Activated CD4-positive, alpha-beta T cell treated with anti-CD3 and anti-CD28 coated beads for 36 hours (primary cell): ENCODE measurements at regions of chr21 and their contacts with region 1.

Region 1: GRCh38 chr21:45643021-45643980 is at the start of gene PCBP3:
- DNase-seq: peak; percentile 99
- ATAC-seq: peak; percentile 84
- H3K4me3 Mint-ChIP-seq: peak within 1 kb of the TSS; percentile 78
- H3K27ac Mint-ChIP-seq: peak within 1 kb of the TSS; percentile 70
- H3K4me1 Mint-ChIP-seq: peaks cover 47% of the 10 kb centered on the region
- H3K27me3 Mint-ChIP-seq: peaks cover 4% of the 10 kb centered on the region
- total RNA-seq, gene PCBP3: 12.2 to 13.2 TPM

Region 2: GRCh38 chr21:45287438-45288391 is 355.6 kb before region 1 on chr21 and contains the start of gene POFUT2:
- CTCF ChIA-PET with region 1: no interaction called
- POLR2A ChIA-PET with region 1: no interaction called
- intact Hi-C with region 1: loop called in 1 of 2 experiments (anchors 1 kb)
- DNase-seq: peak; percentile 99
- ATAC-seq: peak; percentile 86
- H3K4me3 Mint-ChIP-seq: peak within 1 kb of the TSS; percentile 75
- H3K27ac Mint-ChIP-seq: no peak within 1 kb of the TSS
- H3K4me1 Mint-ChIP-seq: peaks cover 15% of the 10 kb centered on the region
- H3K27me3 Mint-ChIP-seq: no peaks in the 10 kb centered on the region
- total RNA-seq, gene POFUT2: 14.7 to 14.9 TPM

Region 3: DNA sequence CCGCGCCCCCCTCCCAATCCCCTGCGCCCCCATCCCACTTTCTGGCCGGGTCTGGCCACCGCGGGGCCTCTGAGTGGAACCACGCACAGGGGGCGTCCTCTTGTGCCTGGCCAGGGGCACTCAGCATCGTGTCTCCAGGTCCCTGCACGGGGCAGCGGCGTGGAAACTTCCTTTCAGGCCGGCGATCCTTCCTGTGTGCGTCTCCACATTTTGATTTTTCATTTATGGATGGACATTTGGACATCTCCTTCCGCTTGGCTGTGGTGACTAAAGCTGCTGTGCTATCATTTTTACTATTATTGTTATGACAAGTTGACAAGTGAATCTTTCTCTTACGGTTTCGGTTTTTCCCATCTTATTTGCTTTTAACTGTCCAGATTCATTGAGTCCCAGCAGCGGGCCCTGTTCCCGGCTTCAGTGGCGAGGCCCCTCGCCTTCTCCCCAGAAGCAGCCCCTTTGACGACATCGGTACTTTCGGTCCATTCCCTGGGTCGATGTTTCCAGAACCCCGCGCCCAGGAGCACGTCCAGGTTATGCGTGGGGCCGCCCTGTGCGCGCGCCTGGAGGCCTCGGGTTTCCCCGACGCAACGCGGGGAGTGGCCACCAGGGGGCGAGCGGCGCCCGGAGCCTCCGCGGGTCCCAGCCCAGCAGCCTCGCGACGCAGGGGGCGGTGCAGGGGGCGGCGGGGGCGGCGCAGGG is 88.7 kb before region 1 on chr21:
- CTCF ChIA-PET with region 1: interaction called, 4 read pairs
- POLR2A ChIA-PET with region 1: no interaction called
- intact Hi-C with region 1: loop called (anchors 1 to 10 kb)
- DNase-seq: peak; percentile 95
- ATAC-seq: peak; percentile 62
- H3K4me3 Mint-ChIP-seq: peak overlapping the region; percentile 95
- H3K27ac Mint-ChIP-seq: peak overlapping the region; percentile 97
- H3K4me1 Mint-ChIP-seq: peaks cover 33% of the 10 kb centered on the region
- H3K27me3 Mint-ChIP-seq: no peaks in the 10 kb centered on the region

Region 4: GRCh38 chr21:45698493-45699184 is 55.3 kb after region 1 on chr21:
- CTCF ChIA-PET with region 1: interaction called, 3 read pairs
- POLR2A ChIA-PET with region 1: interaction called, 5 read pairs
- intact Hi-C with region 1: loop called in 1 of 2 experiments (anchors 2 kb)
- DNase-seq: peak; percentile 61
- ATAC-seq: peak; percentile 84
- H3K4me3 Mint-ChIP-seq: no peak overlapping the region
- H3K27ac Mint-ChIP-seq: peak overlapping the region; percentile 83
- H3K4me1 Mint-ChIP-seq: peaks cover 34% of the 10 kb centered on the region
- H3K27me3 Mint-ChIP-seq: no peaks in the 10 kb centered on the region

Region 5: DNA sequence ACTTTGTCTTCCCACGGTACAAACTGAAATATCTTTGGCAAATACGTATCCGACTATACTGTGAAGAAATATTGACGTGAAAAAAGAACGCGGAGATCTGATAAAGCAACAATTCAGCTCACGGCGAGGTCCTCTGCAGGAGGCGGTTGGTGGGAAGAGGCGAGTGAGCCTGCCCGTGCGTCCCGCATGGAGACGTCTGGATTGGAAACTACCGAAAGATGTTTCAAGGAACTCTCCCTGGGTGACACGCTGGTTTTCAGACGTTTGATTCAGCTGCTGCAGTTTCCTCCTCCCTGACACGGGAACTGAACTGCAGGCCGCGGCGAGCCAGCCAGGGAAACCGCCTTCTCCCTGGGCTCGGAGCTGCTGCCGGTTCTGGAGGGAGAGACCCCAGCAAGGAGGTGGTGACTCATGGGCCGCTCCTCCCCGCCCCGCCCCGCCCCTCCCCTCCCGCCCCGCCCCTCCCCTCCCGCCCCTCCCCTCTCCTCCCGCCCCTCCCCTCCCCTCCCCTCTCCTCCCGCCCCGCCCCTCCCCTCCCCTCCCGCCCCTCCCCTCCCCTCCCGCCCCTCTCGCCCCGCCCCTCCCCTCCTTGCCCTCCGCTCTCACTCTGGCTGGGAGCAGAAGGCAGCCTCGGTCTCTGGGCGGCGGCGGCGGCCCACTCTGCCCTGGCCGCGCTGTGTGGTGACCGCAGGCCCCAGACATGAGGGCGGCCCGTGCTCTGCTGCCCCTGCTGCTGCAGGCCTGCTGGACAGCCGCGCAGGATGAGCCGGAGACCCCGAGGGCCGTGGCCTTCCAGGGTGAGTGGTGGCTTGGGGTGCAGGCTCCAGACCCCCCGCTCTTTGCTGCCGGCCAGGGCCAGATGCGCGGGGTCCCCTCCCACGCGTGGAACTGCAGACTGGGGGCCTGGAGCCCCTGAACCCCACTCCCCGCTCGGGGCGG is 338.1 kb after region 1 on chr21 and contains the start of gene COL6A1:
- CTCF ChIA-PET with region 1: no interaction called
- POLR2A ChIA-PET with region 1: no interaction called
- intact Hi-C with region 1: loop called in 1 of 2 experiments (anchors 1 kb)
- DNase-seq: peak; percentile 77
- ATAC-seq: peak; percentile 56
- H3K4me3 Mint-ChIP-seq: peak within 1 kb of the TSS; percentile 10
- H3K27ac Mint-ChIP-seq: no peak within 1 kb of the TSS
- H3K4me1 Mint-ChIP-seq: peaks cover 8% of the 10 kb centered on the region
- H3K27me3 Mint-ChIP-seq: peaks cover 4% of the 10 kb centered on the region
- total RNA-seq, gene COL6A1: 0.57 to 0.69 TPM